ENCODE measurements at regions of chr7 and their contacts with region 1.

Region 1: GRCh38 chr7:138161600-138162081 is 85.4 kb downstream of the AKR1D1 start:
- DNase-seq: peak; percentile 90
- ATAC-seq: peak; percentile 93
- H3K4me3 ChIP-seq: peak overlapping the region; percentile 23; the same call in 1 of the 2 replicates
- H3K27ac ChIP-seq: no peak overlapping the region
- H3K4me1 ChIP-seq: peaks cover 4% of the 10 kb centered on the region; the same call in 1 of the 2 replicates
- H3K27me3 ChIP-seq: no peaks in the 10 kb centered on the region
- CTCF ChIP-seq: peak; percentile 82

Region 2: DNA sequence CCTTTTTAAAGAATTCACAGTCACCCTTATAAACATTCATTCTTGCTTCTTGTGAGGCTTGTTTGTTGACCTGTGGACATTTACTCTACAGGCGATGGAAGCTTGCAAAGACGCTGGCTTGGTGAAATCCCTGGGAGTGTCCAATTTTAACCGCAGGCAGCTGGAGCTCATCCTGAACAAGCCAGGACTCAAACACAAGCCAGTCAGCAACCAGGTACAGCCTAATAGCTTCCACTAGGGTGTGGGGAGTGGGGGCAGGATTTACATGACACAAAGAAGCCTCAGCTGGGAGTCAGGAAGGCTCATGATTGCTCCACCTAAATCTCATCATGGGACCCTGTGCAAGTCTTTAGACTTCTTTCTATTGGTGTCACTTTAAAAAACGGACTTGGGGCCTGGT is 56.4 kb before region 1 on chr7:
- CTCF ChIA-PET with region 1: no interaction called
- POLR2A ChIA-PET with region 1: no interaction called
- intact Hi-C with region 1: no loop called
- DNase-seq: peak; percentile 41
- ATAC-seq: peak; percentile 13; the same call in 1 of the 2 replicates
- H3K4me3 ChIP-seq: no peak overlapping the region
- H3K27ac ChIP-seq: no peak overlapping the region
- H3K4me1 ChIP-seq: no peaks in the 10 kb centered on the region
- H3K27me3 ChIP-seq: no peaks in the 10 kb centered on the region
- CTCF ChIP-seq: no peak

Region 3: DNA sequence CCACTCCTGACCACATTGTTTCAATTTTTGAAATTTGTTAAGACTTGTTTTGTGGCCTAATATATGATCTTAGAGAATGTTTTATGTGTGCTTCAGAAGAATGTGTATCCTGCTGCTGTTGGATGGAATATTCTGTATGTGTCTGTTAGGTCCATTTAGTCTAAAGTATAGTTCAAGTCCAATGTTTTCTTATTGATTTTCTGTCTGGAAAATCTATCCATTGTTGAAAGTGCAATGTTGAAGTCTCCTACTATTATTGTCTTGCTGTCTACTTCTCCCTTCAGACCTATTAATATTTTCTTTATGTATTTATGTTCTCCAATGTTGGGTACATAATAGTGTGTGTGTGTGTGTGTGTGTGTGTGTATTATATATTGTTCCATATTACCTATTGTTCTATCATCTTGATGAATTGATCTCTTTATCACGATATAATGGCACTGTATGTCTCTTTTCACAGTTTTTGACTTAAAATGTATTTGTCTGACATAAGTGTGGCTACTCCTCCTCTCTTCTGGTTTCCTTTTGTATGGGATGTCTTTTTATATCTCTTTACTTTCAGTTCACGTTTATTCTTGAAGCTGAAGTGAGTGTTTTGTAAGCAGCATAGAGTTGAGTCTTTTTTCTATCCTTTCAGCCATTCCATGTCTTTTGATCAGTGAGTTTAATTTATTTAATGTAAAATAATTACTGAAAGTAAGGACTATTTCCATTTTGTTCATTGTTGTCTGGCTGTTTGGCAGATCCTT is 24.0 kb before region 1 on chr7:
- CTCF ChIA-PET with region 1: no interaction called
- POLR2A ChIA-PET with region 1: no interaction called
- intact Hi-C with region 1: no loop called
- DNase-seq: no peak
- ATAC-seq: no peak
- H3K4me3 ChIP-seq: no peak overlapping the region
- H3K27ac ChIP-seq: no peak overlapping the region
- H3K4me1 ChIP-seq: no peaks in the 10 kb centered on the region
- H3K27me3 ChIP-seq: no peaks in the 10 kb centered on the region
- CTCF ChIP-seq: no peak

Region 4: GRCh38 chr7:138278601-138279000 is 117.0 kb after region 1 on chr7:
- CTCF ChIA-PET with region 1: no interaction called
- POLR2A ChIA-PET with region 1: no interaction called
- intact Hi-C with region 1: no loop called
- DNase-seq: peak; percentile 60
- ATAC-seq: peak; percentile 31; the same call in 1 of the 2 replicates
- H3K4me3 ChIP-seq: no peak overlapping the region
- H3K27ac ChIP-seq: no peak overlapping the region
- H3K4me1 ChIP-seq: peaks cover 4% of the 10 kb centered on the region; the same call in 1 of the 2 replicates
- H3K27me3 ChIP-seq: no peaks in the 10 kb centered on the region
- CTCF ChIP-seq: no peak

Region 5: GRCh38 chr7:138459413-138460175 is 298.0 kb after region 1 on chr7:
- CTCF ChIA-PET with region 1: no interaction called
- POLR2A ChIA-PET with region 1: no interaction called
- intact Hi-C with region 1: loop called (anchors 5 kb)
- DNase-seq: peak; percentile 94
- ATAC-seq: peak; percentile 84
- H3K4me3 ChIP-seq: peak overlapping the region; percentile 67
- H3K27ac ChIP-seq: no peak overlapping the region
- H3K4me1 ChIP-seq: 0 out of 2 replicates have a peak, but pooled peaks cover 3% of the 10 kb centered on the region
- H3K27me3 ChIP-seq: no peaks in the 10 kb centered on the region
- CTCF ChIP-seq: no peak

Region 6: GRCh38 chr7:138854115-138854645 is 692.5 kb after region 1 on chr7:
- CTCF ChIA-PET with region 1: no interaction called
- POLR2A ChIA-PET with region 1: no interaction called
- intact Hi-C with region 1: no loop called
- DNase-seq: peak; percentile 72
- ATAC-seq: peak; percentile 95
- H3K4me3 ChIP-seq: no peak overlapping the region
- H3K27ac ChIP-seq: peak overlapping the region; percentile 44
- H3K4me1 ChIP-seq: peaks cover 18% of the 10 kb centered on the region
- H3K27me3 ChIP-seq: no peaks in the 10 kb centered on the region
- CTCF ChIP-seq: no peak

Measured in PC-3 (cell line).